H1 (cell line): ENCODE measurements at regions of chr1 and their contacts with region 1.

Region 1: DNA sequence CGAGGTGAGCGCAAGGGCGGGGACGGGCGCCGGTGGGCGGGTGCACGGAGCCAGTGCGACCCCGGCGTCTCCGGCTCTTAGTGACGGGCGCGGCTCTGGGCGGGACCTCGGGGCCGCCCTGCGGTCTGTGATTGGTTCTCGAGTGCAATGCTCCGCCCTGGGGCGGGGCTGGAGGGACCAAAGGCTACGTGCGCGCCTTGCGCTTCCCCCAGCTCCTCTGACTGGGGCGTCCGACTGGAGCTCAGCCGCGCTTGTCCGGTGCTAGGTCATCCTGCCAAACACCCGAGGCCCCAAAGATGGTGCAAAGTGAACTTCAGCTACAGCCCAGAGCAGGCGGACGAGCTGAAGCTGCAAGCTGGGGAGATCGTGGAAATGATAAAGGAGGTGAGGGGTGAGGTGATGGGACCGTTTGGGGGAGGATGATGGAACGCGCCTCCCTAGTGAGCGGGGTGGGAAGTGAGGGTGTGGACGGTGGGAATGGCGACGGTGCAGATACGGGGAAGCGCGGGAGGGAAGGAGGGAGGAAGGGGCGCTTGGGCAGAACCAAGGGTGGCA is 811 bp downstream of the SH3D21 start:
- DNase-seq: peak; percentile 88 to 97
- H3K4me3 ChIP-seq: peak overlapping the region; percentile 62 to 87 (median 72)
- H3K27ac ChIP-seq: no peak overlapping the region
- H3K4me1 ChIP-seq: peaks cover 0 to 9% (median 6%) of the 10 kb centered on the region in 4 experiments; a peak in 6 of 7 replicates
- H3K27me3 ChIP-seq: no peaks in the 10 kb centered on the region
- CTCF ChIP-seq: no peak
- EP300 ChIP-seq: no peak
- POLR2A ChIP-seq: peak; percentile 88 to 93
- RAD21 ChIP-seq: no peak

Region 2: GRCh38 chr1:36155408-36156328 is 151.3 kb before region 1 on chr1 and contains the start of gene MAP7D1:
- CTCF ChIA-PET with region 1: no interaction called
- POLR2A ChIA-PET with region 1: interaction called, 21 read pairs
- DNase-seq: peak in 1 of 2 experiments; percentile 93
- H3K4me3 ChIP-seq: peak within 1 kb of the TSS; percentile 64 to 96 (median 76)
- H3K27ac ChIP-seq: peak within 1 kb of the TSS; percentile 49
- H3K4me1 ChIP-seq: peaks cover 2 to 28% (median 14%) of the 10 kb centered on the region in 4 experiments
- H3K27me3 ChIP-seq: peaks cover 11 to 29% (median 25%) of the 10 kb centered on the region in 4 experiments
- CTCF ChIP-seq: no peak
- EP300 ChIP-seq: peak in 1 of 2 experiments; percentile 70; a peak in 2 of 3 replicates
- POLR2A ChIP-seq: peak in 1 of 2 experiments; percentile 37; a peak in 1 of 3 replicates
- RAD21 ChIP-seq: no peak
- total RNA-seq, gene MAP7D1: 52.4 and 55.1 TPM in 2 replicates

Region 3: GRCh38 chr1:36166938-36167910 is 139.8 kb before region 1 on chr1:
- CTCF ChIA-PET with region 1: no interaction called
- POLR2A ChIA-PET with region 1: no interaction called
- DNase-seq: no peak
- H3K4me3 ChIP-seq: no peak overlapping the region
- H3K27ac ChIP-seq: no peak overlapping the region
- H3K4me1 ChIP-seq: no peaks in the 10 kb centered on the region; a peak in 1 of 7 replicates
- H3K27me3 ChIP-seq: no peaks in the 10 kb centered on the region
- CTCF ChIP-seq: no peak
- EP300 ChIP-seq: no peak
- POLR2A ChIP-seq: no peak
- RAD21 ChIP-seq: no peak

Region 4: DNA sequence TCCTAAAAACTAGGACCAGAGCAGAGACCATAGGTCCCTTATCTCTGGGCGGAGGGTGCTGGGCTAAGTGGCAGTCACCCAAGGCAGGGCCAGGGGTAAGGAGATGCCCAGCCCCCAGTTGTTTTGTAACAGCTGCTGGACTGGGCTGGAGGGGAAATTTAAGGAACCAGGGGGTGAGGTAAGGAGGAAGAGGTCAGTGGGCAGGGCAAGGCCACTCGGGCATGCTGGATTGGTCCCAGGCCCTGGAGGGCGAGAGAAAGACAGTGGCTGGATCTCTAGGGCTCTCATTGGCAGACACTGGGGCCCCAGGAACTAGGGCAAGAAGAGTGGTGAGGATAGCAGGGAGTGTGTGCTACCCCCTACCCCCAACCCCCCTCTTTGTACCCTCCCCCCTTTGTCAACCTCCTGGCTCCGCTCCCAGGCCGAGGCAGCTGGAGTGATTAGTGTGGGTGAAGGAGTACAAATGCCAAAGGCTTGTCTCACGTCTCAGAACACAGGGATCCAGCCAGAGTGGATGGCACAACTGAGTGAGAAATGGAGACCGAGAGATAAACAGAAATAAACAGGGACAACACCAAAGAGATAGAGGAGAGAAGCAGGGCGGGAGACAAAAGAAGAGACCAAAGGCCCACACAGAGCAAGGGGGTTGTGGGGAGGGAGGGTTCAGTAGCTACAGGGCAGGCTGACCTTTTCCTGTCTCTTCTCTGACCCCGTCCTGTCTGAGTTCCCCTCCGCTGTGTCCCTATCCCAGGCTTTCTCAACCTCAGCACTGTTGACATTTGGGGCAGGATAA is 103.2 kb before region 1 on chr1:
- CTCF ChIA-PET with region 1: no interaction called
- POLR2A ChIA-PET with region 1: no interaction called
- DNase-seq: peak in 1 of 2 experiments; percentile 54
- H3K4me3 ChIP-seq: no peak overlapping the region
- H3K27ac ChIP-seq: no peak overlapping the region
- H3K4me1 ChIP-seq: peaks cover 0 to 10% (median 3%) of the 10 kb centered on the region in 4 experiments; a peak in 5 of 7 replicates
- H3K27me3 ChIP-seq: no peaks in the 10 kb centered on the region
- CTCF ChIP-seq: no peak
- EP300 ChIP-seq: no peak
- POLR2A ChIP-seq: no peak
- RAD21 ChIP-seq: no peak

Region 5: GRCh38 chr1:36323597-36324352 is 16.8 kb after region 1 on chr1 and contains the start of gene EVA1B:
- CTCF ChIA-PET with region 1: interaction called, 5 read pairs
- POLR2A ChIA-PET with region 1: interaction called, 130 read pairs
- DNase-seq: peak in 1 of 2 experiments; percentile 79
- H3K4me3 ChIP-seq: peak within 1 kb of the TSS; percentile 27 to 67 (median 49)
- H3K27ac ChIP-seq: no peak within 1 kb of the TSS
- H3K4me1 ChIP-seq: peaks cover 0 to 28% (median 16%) of the 10 kb centered on the region in 4 experiments; a peak in 6 of 7 replicates
- H3K27me3 ChIP-seq: peaks cover 0 to 39% (median 20%) of the 10 kb centered on the region in 4 experiments; a peak in 5 of 7 replicates
- CTCF ChIP-seq: no peak
- EP300 ChIP-seq: no peak
- POLR2A ChIP-seq: no peak; a peak in 1 of 3 replicates
- RAD21 ChIP-seq: no peak
- total RNA-seq, gene EVA1B: 10.0 and 10.3 TPM in 2 replicates

Region 6: GRCh38 chr1:36450270-36450918 is 143.4 kb after region 1 on chr1 and contains the start of gene OSCP1:
- CTCF ChIA-PET with region 1: no interaction called
- POLR2A ChIA-PET with region 1: no interaction called
- DNase-seq: peak; percentile 87 to 94
- H3K4me3 ChIP-seq: peak within 1 kb of the TSS; percentile 64 to 72 (median 70)
- H3K27ac ChIP-seq: peak within 1 kb of the TSS; percentile 51
- H3K4me1 ChIP-seq: no peaks in the 10 kb centered on the region; a peak in 1 of 7 replicates
- H3K27me3 ChIP-seq: no peaks in the 10 kb centered on the region
- CTCF ChIP-seq: no peak
- EP300 ChIP-seq: no peak
- POLR2A ChIP-seq: peak; percentile 31 to 88
- RAD21 ChIP-seq: no peak
- total RNA-seq, gene OSCP1: 1.4 and 1.8 TPM in 2 replicates

Region 7: GRCh38 chr1:36553591-36554322 is 246.8 kb after region 1 on chr1:
- CTCF ChIA-PET with region 1: no interaction called
- POLR2A ChIA-PET with region 1: no interaction called
- DNase-seq: peak; percentile 58 to 93
- H3K4me3 ChIP-seq: no peak overlapping the region
- H3K27ac ChIP-seq: no peak overlapping the region
- H3K4me1 ChIP-seq: no peaks in the 10 kb centered on the region
- H3K27me3 ChIP-seq: peaks cover 0 to 5% (median 2%) of the 10 kb centered on the region in 4 experiments; a peak in 4 of 7 replicates
- CTCF ChIP-seq: peak; percentile 85 to 97 (median 91)
- EP300 ChIP-seq: no peak
- POLR2A ChIP-seq: no peak
- RAD21 ChIP-seq: peak; percentile 97